ENCODE measurements at regions of chr12 and their contacts with region 1.

Region 1: DNA sequence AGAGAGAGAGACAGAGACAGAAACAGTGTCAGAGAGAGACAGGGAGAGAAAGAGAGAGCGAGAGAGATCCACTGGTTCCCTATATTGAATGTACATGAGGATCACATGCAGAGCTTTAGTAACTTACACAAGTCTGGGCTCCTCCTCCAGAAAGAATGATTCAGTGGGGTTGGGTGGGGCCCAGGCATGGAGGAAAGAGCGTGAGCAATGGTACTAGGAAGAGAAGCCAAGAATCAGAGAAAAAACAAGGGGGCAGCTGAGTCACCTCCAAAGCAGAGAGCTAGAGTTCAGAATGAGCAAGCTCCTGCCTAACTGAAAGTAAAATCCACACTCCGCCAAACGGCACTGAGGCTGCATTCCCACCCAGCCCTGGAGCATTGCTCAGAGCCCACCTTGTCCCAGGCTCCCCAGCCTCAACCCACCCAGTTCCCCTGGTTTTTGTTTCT is 670.1 kb upstream of the TBX3 start:
- DNase-seq: peak; percentile 98
- ATAC-seq: peak; percentile 97
- H3K4me3 ChIP-seq: peak overlapping the region; percentile 49
- H3K27ac ChIP-seq: peak overlapping the region; percentile 94
- H3K4me1 ChIP-seq: peaks cover 6% of the 10 kb centered on the region
- H3K27me3 ChIP-seq: no peaks in the 10 kb centered on the region
- CTCF ChIP-seq: no peak
- POLR2A ChIP-seq: peak; percentile 85
- RAD21 ChIP-seq: peak; percentile 39

Region 2: DNA sequence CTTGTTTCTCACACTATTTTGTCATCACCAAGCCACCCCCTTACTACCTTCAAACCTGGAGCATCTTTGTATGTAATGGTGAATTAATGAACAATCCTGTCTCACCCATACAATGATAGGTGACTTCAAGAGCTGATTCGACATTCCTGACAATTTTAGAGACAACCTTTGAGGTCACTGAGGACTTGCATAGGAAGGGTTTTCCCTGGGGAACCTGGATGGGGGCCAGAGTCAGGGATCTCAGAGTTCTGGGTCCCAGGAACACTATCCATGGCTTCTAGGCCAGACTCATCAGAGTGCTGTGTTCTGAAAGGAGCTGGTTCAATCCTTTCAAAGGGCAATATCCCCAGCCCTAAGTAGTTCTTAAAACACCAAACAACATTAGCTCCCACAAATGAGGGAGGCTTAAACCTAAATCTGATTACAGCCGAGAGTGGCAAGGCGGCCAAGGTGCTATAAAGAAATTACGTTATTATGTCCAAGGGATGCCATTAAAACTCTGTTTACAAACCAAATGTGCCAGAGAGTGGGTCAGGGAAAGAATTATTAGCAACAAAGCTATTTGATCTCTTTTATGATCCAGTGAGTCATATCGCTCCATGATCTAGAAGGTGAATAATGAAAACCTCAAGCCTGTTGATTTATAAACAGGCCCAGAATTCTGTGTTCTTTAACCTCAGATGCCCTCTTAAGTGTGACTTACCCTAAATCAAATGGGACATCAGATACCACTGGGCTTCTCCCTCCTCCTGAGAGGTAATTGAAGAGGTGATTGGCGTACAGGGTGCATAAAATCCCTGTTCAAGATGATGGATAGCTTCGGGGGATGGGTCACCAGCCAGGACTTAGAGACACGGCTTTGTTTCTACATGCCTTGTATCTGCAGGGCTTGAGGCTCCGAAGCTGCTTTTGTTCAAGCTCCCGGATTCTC is 439.9 kb before region 1 on chr12:
- CTCF ChIA-PET with region 1: no interaction called
- POLR2A ChIA-PET with region 1: no interaction called
- dilution Hi-C with region 1: no loop called
- in situ Hi-C with region 1: no loop called
- intact Hi-C with region 1: loop called (anchors 10 kb)
- DNase-seq: peak; percentile 65
- ATAC-seq: peak; percentile 11; the same call in 1 of the 2 replicates
- H3K4me3 ChIP-seq: no peak overlapping the region
- H3K27ac ChIP-seq: no peak overlapping the region
- H3K4me1 ChIP-seq: peaks cover 19% of the 10 kb centered on the region
- H3K27me3 ChIP-seq: no peaks in the 10 kb centered on the region
- CTCF ChIP-seq: no peak
- POLR2A ChIP-seq: 0 out of 2 replicates have a peak, but pooled peaks have one; percentile 8
- RAD21 ChIP-seq: no peak

Region 3: DNA sequence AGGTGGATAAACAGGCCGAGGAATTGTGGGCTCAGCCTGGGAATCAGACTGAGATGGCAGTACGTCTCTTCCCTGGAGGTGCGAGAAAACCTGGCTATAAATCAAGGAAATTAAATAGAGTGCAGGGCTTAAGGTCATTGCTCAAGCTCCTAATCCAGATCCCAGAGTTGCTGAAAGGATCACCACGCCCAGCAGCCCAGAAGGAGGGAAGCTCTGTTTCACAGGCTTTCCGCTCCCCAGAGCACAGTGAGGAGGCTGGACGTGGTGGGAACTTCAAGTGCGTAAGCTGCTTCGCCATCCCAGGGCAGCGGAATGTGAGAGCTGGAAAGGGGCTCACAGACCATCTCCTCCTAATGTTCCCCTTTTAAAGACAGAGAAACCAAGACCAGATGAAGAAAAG is 18.4 kb before region 1 on chr12:
- CTCF ChIA-PET with region 1: no interaction called
- POLR2A ChIA-PET with region 1: no interaction called
- dilution Hi-C with region 1: no loop called
- in situ Hi-C with region 1: no loop called
- intact Hi-C with region 1: no loop called
- DNase-seq: no peak
- ATAC-seq: no peak
- H3K4me3 ChIP-seq: no peak overlapping the region
- H3K27ac ChIP-seq: no peak overlapping the region
- H3K4me1 ChIP-seq: peaks cover 8% of the 10 kb centered on the region
- H3K27me3 ChIP-seq: no peaks in the 10 kb centered on the region
- CTCF ChIP-seq: no peak
- POLR2A ChIP-seq: no peak
- RAD21 ChIP-seq: no peak

Measured in IMR-90 (cell line).